Breast epithelium (tissue), 4 donors: ENCODE measurements at regions of chr11 and their contacts with region 1.

Region 1: DNA sequence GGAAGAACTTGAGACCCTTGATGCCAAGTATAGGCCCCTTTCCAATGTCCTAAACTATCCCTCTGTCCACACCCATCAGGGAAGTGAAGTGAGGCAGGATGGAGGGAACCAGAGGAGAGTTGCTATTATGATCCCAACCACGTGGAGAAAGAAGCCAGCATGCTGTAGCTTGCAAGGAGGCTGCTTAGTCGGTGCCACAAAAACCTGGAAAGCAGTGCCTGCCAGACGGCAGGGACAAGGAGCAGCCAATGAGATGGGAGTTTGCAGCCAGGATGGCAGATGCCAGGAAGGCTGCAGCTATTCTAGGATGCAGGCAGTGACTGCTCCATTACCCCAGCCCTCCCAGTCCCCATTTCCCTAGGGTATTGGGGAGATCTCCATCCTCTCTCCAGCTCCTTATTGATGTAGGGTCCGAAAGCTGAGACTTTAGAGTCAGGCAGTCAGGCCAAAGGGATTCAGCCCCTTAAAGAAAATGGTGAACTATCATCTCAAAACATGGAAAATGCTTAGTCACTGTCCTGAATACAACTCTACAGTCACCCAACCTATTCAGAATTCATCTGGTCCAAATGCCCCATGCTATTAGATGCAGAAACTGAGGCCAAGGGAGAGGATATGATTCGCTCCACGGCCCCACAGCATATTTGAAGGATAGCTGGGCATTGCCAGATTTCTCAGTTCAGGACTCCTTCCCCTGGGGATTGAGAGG is 18.4 kb upstream of the LRRC55 start:
- DNase-seq: no peak
- H3K4me3 ChIP-seq: no peak overlapping the region
- H3K27ac ChIP-seq: no peak overlapping the region
- H3K4me1 ChIP-seq: no peaks in the 10 kb centered on the region
- H3K27me3 ChIP-seq: peaks cover 0 to 12% of the 10 kb centered on the region in 2 donors
- CTCF ChIP-seq: no peak
- POLR2A ChIP-seq: no peak

Region 2: DNA sequence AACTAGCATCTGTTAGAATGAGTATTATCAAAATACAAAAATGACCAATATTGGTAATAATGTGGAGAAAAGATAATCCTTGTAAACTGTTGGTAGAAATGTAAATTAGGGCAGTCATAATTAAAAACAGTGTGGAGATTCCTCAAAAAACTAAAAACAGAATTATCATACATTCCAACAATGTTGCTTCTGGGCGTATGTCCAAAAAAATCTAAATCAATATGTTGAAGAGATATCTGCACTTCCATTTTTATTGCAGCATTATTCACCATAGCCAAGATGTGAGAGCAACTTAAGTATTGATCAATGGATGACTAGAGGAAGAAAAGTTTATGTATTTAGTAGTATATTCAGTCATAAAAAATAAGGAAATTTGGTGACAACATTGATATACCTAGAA is 355.0 kb before region 1 on chr11:
- intact Hi-C with region 1: no loop called
- DNase-seq: no peak
- H3K4me3 ChIP-seq: no peak overlapping the region
- H3K27ac ChIP-seq: no peak overlapping the region
- H3K4me1 ChIP-seq: no peaks in the 10 kb centered on the region
- H3K27me3 ChIP-seq: no peaks in the 10 kb centered on the region
- CTCF ChIP-seq: no peak
- POLR2A ChIP-seq: no peak

Region 3: DNA sequence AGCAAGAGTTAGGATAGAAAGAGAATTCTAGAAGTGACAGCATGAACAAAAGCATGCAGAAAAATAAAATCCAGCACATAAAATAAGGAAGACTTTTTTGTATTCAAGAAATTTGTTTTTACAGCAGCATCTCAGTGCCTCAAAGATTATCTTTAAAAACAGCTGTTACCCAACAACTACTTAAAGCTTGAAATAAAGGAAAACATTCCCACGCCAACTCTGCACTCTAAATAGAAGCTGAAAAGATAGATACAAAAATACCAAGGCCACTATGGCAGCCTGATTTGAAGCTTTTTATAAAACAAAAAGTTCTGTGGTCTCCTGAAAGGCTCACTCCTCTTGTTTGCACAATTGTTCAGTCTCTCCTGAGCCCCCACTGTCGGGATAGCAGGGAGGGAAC is 65.1 kb before region 1 on chr11:
- intact Hi-C with region 1: loop called (anchors 2 kb)
- DNase-seq: no peak
- H3K4me3 ChIP-seq: no peak overlapping the region
- H3K27ac ChIP-seq: no peak overlapping the region
- H3K4me1 ChIP-seq: no peaks in the 10 kb centered on the region
- H3K27me3 ChIP-seq: no peaks in the 10 kb centered on the region
- CTCF ChIP-seq: no peak
- POLR2A ChIP-seq: no peak

Region 4: DNA sequence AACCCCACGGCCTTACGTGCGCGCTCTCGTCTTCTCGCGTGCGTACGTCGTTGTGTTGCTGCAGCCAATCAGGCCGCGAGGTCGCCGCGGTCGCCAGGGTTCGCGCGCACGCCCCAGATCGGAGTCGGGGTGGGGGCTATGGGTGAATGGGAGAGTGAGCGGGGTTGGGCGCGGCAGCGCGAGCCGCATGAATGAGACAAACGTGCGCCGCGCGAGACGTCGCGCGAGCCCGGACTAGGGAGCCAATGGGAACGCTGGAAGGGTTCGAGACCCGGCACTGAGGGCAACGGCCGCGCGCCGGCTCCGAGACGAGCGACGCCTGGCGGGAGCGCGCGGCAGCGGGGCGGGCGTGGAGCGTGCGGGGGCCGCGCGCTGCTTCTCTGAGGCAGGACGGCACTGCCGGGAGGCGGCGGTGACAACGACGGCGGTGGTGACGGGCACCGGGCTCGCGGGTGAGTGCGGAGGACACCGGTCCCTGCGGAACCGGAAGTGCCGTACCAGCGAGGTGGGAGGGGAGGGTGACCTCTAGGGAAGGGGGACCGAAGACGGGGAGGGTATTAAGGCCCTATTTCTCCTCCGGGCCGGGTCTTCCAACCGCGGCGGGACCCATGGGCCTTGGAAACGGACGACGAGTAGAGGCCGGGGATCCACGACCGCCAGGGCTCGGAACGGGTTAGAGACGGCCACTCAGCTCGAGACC is 504.6 kb after region 1 on chr11 and contains the start of gene ZDHHC5:
- intact Hi-C with region 1: no loop called
- DNase-seq: peak; percentile 99
- H3K4me3 ChIP-seq: peak within 1 kb of the TSS; percentile 95 to 100 (median 98)
- H3K27ac ChIP-seq: peak within 1 kb of the TSS; percentile 99 to 100
- H3K4me1 ChIP-seq: peaks cover 0 to 11% of the 10 kb centered on the region in 2 donors
- H3K27me3 ChIP-seq: no peaks in the 10 kb centered on the region
- CTCF ChIP-seq: peak in 2 of 3 donors; percentile 9 to 29
- POLR2A ChIP-seq: no peak
- total RNA-seq, gene ZDHHC5: 39.3 to 50.2 (median 39.8) TPM